ENCODE measurements at regions of chr17 and their contacts with region 1.

Region 1: GRCh38 chr17:42609182-42609813 is at the starts of genes RETREG3 and TUBG1:
- DNase-seq: peak; percentile 98 to 100
- ATAC-seq: peak; percentile 88 to 95 (median 90)
- H3K4me3 ChIP-seq: peak within 1 kb of the TSS; percentile 98
- H3K4me3 Mint-ChIP-seq: peak within 1 kb of the TSS; percentile 100
- H3K27ac ChIP-seq: peak within 1 kb of the TSS; percentile 90
- H3K27ac Mint-ChIP-seq: peak within 1 kb of the TSS; percentile 96 to 97
- H3K4me1 ChIP-seq: peaks cover 32% of the 10 kb centered on the region
- H3K4me1 Mint-ChIP-seq: peaks cover 44 to 53% of the 10 kb centered on the region in 2 donors
- H3K27me3 ChIP-seq: no peaks in the 10 kb centered on the region
- H3K27me3 Mint-ChIP-seq: no peaks in the 10 kb centered on the region
- CTCF ChIP-seq: no peak
- total RNA-seq, gene RETREG3: 76.0 to 114 (median 101) TPM
- total RNA-seq, gene TUBG1: 9.7 to 16.5 (median 13.0) TPM

Region 2: GRCh38 chr17:42354956-42355843 is 254.1 kb before region 1 on chr17:
- intact Hi-C with region 1: no loop called
- DNase-seq: no peak
- ATAC-seq: no peak
- H3K4me3 ChIP-seq: no peak overlapping the region
- H3K4me3 Mint-ChIP-seq: no peak overlapping the region
- H3K27ac ChIP-seq: no peak overlapping the region
- H3K27ac Mint-ChIP-seq: peak overlapping the region in 1 of 2 donors; percentile 24
- H3K4me1 ChIP-seq: peaks cover 4% of the 10 kb centered on the region
- H3K4me1 Mint-ChIP-seq: peaks cover 27 to 32% of the 10 kb centered on the region in 2 donors
- H3K27me3 ChIP-seq: no peaks in the 10 kb centered on the region
- H3K27me3 Mint-ChIP-seq: no peaks in the 10 kb centered on the region
- CTCF ChIP-seq: no peak

Region 3: DNA sequence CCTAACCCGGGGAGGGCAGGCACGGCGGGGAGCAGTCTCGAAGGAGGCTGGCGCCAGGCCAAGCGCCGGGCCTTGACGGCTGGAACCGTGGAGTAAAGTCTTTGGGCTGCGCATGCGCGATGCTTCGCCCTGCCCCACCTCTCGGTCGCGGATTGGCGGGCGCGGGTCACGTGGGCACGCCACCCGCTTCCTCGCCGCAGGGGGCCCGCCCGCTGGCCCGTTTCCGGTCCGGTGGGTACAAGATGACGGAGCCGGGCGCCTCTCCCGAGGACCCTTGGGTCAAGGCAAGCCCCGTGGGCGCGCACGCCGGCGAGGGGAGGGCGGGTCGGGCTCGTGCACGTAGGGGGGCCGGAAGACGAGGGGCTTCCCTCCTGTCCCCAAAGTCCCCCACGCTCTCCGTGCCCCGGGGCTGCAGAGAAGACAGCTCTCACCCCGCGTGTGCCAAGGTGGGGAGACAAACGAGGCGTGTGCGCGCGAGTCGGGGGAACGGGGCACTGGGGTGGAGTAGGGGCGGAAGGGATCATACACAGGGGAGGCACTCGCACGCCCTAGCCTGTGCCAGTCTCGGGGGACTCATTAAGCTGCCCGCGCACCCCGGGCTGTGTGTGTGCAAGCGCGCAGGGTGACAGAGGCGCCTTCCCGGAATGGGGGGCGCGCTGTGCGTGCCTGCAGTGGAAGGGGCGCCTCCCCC is 42.3 kb before region 1 on chr17 and contains the start of gene MLX:
- intact Hi-C with region 1: loop called (anchors 5 kb)
- DNase-seq: peak; percentile 94 to 97
- ATAC-seq: peak; percentile 74 to 85 (median 79)
- H3K4me3 ChIP-seq: peak within 1 kb of the TSS; percentile 79
- H3K4me3 Mint-ChIP-seq: peak within 1 kb of the TSS; percentile 92
- H3K27ac ChIP-seq: peak within 1 kb of the TSS; percentile 77
- H3K27ac Mint-ChIP-seq: peak within 1 kb of the TSS; percentile 85 to 96
- H3K4me1 ChIP-seq: peaks cover 50% of the 10 kb centered on the region
- H3K4me1 Mint-ChIP-seq: peaks cover 40 to 43% of the 10 kb centered on the region in 2 donors
- H3K27me3 ChIP-seq: no peaks in the 10 kb centered on the region
- H3K27me3 Mint-ChIP-seq: no peaks in the 10 kb centered on the region
- CTCF ChIP-seq: no peak
- total RNA-seq, gene MLX: 38.9 to 58.2 (median 42.6) TPM

Region 4: GRCh38 chr17:42591411-42591810 is 17.9 kb before region 1 on chr17:
- intact Hi-C with region 1: no loop called
- DNase-seq: no peak
- ATAC-seq: no peak
- H3K4me3 ChIP-seq: no peak overlapping the region
- H3K4me3 Mint-ChIP-seq: no peak overlapping the region
- H3K27ac ChIP-seq: no peak overlapping the region
- H3K27ac Mint-ChIP-seq: no peak overlapping the region
- H3K4me1 ChIP-seq: no peaks in the 10 kb centered on the region
- H3K4me1 Mint-ChIP-seq: peaks cover 8 to 14% of the 10 kb centered on the region in 2 donors
- H3K27me3 ChIP-seq: no peaks in the 10 kb centered on the region
- H3K27me3 Mint-ChIP-seq: no peaks in the 10 kb centered on the region
- CTCF ChIP-seq: no peak

Region 5: DNA sequence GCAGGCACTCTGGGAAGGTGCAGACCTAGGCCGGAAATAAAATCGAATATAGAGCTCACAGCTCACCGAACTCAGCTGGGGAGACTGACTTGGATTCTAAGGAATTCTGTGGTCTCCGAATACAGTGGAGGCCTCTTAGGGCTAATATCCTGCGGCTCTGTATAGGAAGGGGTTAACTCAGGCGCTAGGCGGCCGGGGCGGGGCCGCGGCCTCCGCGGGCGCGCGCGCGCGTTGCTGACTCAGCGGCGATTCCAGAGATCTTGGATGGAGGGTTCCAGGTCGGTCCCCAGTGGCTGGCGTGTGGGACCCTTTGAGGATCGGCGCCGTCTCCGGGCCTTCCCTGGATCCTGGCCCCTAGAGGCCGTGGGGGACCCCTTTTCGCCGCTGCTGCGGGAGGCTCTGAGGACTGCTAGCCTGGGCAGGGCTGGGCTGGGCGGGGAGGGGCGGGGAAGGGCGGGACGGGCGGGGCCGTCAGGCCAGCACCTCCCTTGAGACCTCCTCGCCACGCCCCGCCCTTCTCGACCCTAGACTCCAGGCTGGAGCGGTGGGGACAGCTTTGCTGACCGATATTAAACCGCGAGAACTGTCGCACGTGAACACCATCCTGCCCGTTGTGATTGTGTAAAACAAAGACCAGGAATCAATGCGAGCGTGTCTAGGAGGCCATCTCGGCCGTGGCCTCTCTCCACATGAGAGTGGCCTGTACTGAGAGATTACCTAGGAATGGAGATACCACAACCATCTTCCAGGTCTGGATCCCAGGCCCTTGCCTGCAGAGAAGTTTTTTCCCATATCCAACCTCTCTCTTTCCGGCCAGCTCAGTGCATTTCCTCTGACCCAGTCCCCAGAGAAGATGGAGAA is 68.9 kb after region 1 on chr17:
- intact Hi-C with region 1: loop called (anchors 2 kb)
- DNase-seq: peak; percentile 78 to 80
- ATAC-seq: peak; percentile 25 to 54 (median 30)
- H3K4me3 ChIP-seq: peak overlapping the region; percentile 52
- H3K4me3 Mint-ChIP-seq: peak overlapping the region; percentile 94
- H3K27ac ChIP-seq: peak overlapping the region; percentile 36
- H3K27ac Mint-ChIP-seq: peak overlapping the region; percentile 74 to 81
- H3K4me1 ChIP-seq: peaks cover 89% of the 10 kb centered on the region
- H3K4me1 Mint-ChIP-seq: peaks cover 21 to 63% of the 10 kb centered on the region in 2 donors
- H3K27me3 ChIP-seq: peaks cover 49% of the 10 kb centered on the region
- H3K27me3 Mint-ChIP-seq: peaks cover 21 to 38% of the 10 kb centered on the region in 2 donors
- CTCF ChIP-seq: no peak

Region 6: GRCh38 chr17:43062984-43063638 is 453.8 kb after region 1 on chr17:
- intact Hi-C with region 1: no loop called
- DNase-seq: no peak
- ATAC-seq: no peak
- H3K4me3 ChIP-seq: no peak overlapping the region
- H3K4me3 Mint-ChIP-seq: no peak overlapping the region
- H3K27ac ChIP-seq: no peak overlapping the region
- H3K27ac Mint-ChIP-seq: no peak overlapping the region
- H3K4me1 ChIP-seq: no peaks in the 10 kb centered on the region
- H3K4me1 Mint-ChIP-seq: no peaks in the 10 kb centered on the region
- H3K27me3 ChIP-seq: no peaks in the 10 kb centered on the region
- H3K27me3 Mint-ChIP-seq: no peaks in the 10 kb centered on the region
- CTCF ChIP-seq: no peak

Measured in natural killer cell (primary cell).